Dendritic cell treated with granulocyte-macrophage colony-stimulating factor and Interleukin-4, amounts not matched to agents 40 ng/mL and 50 ng/mL, for 4 days (primary cell): ENCODE measurements at regions of chr18 and their contacts with region 1.

Region 1: DNA sequence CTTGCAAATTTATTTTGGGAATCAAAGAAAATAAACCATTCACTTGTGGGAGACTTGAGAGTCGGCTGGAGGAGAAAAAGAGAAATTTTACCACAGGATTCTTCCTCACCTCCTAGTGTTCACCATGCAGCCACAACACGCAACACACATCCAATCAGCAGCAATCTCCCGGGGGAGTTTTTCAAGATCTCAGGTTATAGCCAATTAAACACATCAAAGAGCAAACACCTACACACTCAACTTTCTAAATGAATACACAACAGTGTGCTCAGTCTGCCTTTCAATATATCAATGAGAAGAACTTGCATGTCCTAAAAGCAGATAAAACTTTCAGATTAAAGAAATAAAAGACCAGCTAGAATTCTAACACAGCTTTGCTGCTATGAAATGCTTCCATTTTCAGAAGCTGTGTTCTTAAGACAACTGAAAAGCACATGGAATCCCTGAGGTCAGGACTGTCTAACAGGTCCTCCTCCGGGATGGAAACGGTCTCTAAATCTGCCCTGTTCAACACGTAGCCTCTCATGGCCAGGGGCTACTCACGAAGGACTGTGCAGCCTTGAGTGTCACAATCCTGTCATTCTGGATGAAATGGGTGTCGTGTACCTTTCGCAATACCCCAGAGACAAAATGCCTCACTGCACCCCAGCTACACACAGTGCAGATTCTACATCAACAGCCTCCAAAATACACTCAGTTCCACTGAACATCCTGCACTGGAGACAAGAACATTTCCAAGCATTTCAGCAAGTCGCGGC is 84.2 kb downstream of the ZNF516 start:
- H3K4me3 Mint-ChIP-seq: no peak overlapping the region
- H3K27ac Mint-ChIP-seq: peak overlapping the region; percentile 19
- H3K4me1 Mint-ChIP-seq: peaks cover 81% of the 10 kb centered on the region
- H3K27me3 Mint-ChIP-seq: no peaks in the 10 kb centered on the region

Region 2: GRCh38 chr18:76306685-76307292 is 104.0 kb before region 1 on chr18:
- intact Hi-C with region 1: no loop called
- H3K4me3 Mint-ChIP-seq: no peak overlapping the region
- H3K27ac Mint-ChIP-seq: no peak overlapping the region
- H3K4me1 Mint-ChIP-seq: no peaks in the 10 kb centered on the region
- H3K27me3 Mint-ChIP-seq: peaks cover 2% of the 10 kb centered on the region

Region 3: GRCh38 chr18:76573325-76574025 is 162.6 kb after region 1 on chr18:
- intact Hi-C with region 1: loop called (anchors 5 kb)
- H3K4me3 Mint-ChIP-seq: no peak overlapping the region
- H3K27ac Mint-ChIP-seq: peak overlapping the region; percentile 56
- H3K4me1 Mint-ChIP-seq: peaks cover 49% of the 10 kb centered on the region
- H3K27me3 Mint-ChIP-seq: peaks cover 3% of the 10 kb centered on the region